ENCODE measurements at regions of chr15 and their contacts with region 1.

Region 1: DNA sequence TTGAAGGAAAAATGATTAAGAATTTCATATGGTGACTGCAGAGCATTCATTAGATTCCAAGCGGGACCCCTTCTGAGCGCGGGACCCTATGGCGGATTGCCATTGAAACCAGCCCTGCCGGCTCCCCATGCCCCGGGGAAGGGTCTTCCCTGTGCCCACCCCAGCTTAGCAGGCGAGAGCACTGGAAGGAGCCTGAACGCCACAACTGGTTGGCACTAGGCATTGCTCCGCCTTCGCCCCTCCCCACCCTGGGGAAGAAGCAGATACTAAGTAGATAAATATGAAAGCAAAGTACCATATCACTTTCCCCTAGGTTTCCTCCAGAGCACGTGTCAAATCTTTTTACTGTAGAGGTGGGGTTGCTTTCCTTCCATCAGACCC is 70.7 kb downstream of the CYP19A1 start:
- DNase-seq: peak in 4 of 10 donors; percentile 20 to 56 (median 38)
- H3K4me3 ChIP-seq: peak overlapping the region; percentile 35 to 79 (median 66)
- H3K27ac ChIP-seq: peak overlapping the region in 34 of 59 donors; percentile 6 to 79 (median 48)
- H3K27me3 ChIP-seq: no peaks in the 10 kb centered on the region
- CTCF ChIP-seq: no peak

Region 2: GRCh38 chr15:50256188-50257041 is 1011.3 kb before region 1 on chr15:
- intact Hi-C with region 1: no loop called
- DNase-seq: no peak
- H3K4me3 ChIP-seq: no peak overlapping the region
- H3K27ac ChIP-seq: no peak overlapping the region
- H3K27me3 ChIP-seq: peaks cover 0 to 13% (median 0%) of the 10 kb centered on the region in 45 donors
- CTCF ChIP-seq: no peak

Region 3: GRCh38 chr15:51203797-51204196 is 63.9 kb before region 1 on chr15:
- intact Hi-C with region 1: loop called in 1 of 2 experiments (anchors 10 kb)
- DNase-seq: no peak
- H3K4me3 ChIP-seq: no peak overlapping the region
- H3K27ac ChIP-seq: no peak overlapping the region
- H3K27me3 ChIP-seq: peaks cover 0 to 6% (median 0%) of the 10 kb centered on the region in 45 donors
- CTCF ChIP-seq: no peak

Region 4: GRCh38 chr15:51299187-51300066 is 31.7 kb after region 1 on chr15:
- intact Hi-C with region 1: no loop called
- DNase-seq: peak in 2 of 10 donors; percentile 25 to 50
- H3K4me3 ChIP-seq: no peak overlapping the region
- H3K27ac ChIP-seq: peak overlapping the region in 55 of 59 donors; percentile 0 to 88 (median 69)
- H3K27me3 ChIP-seq: no peaks in the 10 kb centered on the region
- CTCF ChIP-seq: peak in 10 of 56 donors; percentile 12 to 46 (median 22)